CD8-positive, alpha-beta T cell (primary cell): ENCODE measurements at regions of chr6 and their contacts with region 1.

Region 1: DNA sequence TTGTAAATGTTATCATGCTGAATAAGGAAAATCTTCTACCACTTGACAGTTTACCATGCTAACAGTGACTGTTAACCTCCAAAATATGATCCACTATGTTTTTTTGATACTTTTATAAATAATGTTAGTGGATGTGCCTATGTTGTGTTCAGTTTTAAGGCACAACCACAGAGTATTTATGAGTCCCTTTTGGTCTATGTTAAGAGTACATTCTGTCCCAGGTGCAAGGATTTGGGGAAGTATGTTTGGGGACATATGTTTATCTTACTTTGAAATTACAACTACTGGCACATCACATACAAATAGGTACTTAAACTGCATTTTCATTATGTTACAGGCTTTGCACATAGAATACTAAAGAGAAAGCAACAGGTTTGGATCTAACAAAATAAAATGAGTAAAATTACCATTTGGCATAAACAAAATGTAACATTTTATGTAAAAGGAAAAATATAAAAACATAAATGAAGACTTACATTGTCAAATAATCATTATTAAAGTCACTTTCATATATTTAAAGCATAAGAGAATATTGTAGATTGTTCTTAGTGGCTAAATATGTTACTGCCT is 71.2 kb downstream of the SESN1 start:
- DNase-seq: no peak
- ATAC-seq: no peak
- H3K4me3 ChIP-seq: no peak overlapping the region
- H3K4me3 Mint-ChIP-seq: no peak overlapping the region
- H3K27ac ChIP-seq: no peak overlapping the region
- H3K27ac Mint-ChIP-seq: no peak overlapping the region
- H3K4me1 ChIP-seq: peaks cover 22% of the 10 kb centered on the region
- H3K4me1 Mint-ChIP-seq: peaks cover 54% of the 10 kb centered on the region
- H3K27me3 ChIP-seq: no peaks in the 10 kb centered on the region
- H3K27me3 Mint-ChIP-seq: no peaks in the 10 kb centered on the region
- CTCF ChIP-seq: no peak

Region 2: DNA sequence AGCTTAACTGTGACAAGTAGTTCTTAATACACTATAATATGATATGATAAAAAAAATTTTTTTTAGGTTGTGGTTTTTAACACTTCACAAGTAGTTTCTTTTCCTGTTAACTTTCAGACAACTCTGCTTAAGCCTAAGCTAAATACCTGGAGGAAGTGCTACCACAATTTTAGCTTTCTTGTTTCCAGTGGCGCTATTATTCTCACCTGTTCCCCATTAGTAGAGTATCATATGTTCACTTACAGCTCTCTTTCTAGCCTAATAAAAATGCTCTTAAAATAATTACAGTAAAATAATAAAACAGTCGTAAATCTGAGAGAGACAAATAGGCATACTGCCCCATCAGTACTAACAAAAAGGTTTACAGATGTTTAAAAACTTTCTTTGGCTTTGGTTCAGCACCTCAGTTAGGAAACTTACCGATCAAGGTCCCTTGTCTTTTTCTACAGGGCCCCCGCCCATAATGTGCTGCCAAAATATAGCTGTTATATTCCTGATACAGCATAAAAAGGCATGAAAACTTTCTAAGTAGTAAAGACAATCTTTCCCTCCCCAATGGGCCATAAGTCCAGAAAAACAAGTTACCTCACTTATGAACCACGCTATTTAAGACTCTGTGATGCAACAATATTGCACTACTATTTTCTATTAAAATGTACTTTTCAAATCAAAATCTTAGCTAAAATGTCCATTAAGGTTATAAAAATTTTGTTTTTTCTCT is 13.3 kb after region 1 on chr6:
- CTCF ChIA-PET with region 1: no interaction called
- POLR2A ChIA-PET with region 1: interaction called, 4 read pairs
- intact Hi-C with region 1: loop called in 1 of 2 experiments (anchors 2 kb)
- DNase-seq: peak in 2 of 9 experiments; percentile 42 to 64
- ATAC-seq: peak; percentile 64
- H3K4me3 ChIP-seq: no peak overlapping the region
- H3K4me3 Mint-ChIP-seq: no peak overlapping the region
- H3K27ac ChIP-seq: peak overlapping the region in 1 of 2 experiments; percentile 45
- H3K27ac Mint-ChIP-seq: peak overlapping the region; percentile 64
- H3K4me1 ChIP-seq: peaks cover 22% of the 10 kb centered on the region
- H3K4me1 Mint-ChIP-seq: peaks cover 50% of the 10 kb centered on the region
- H3K27me3 ChIP-seq: no peaks in the 10 kb centered on the region
- H3K27me3 Mint-ChIP-seq: no peaks in the 10 kb centered on the region
- CTCF ChIP-seq: no peak